Ascending aorta (tissue), 2 donors: ENCODE measurements at regions of chr16 and their contacts with region 1.

Region 1: GRCh38 chr16:77788181-77789084 is at the start of gene VAT1L:
- DNase-seq: peak in 1 of 2 donors; percentile 72
- H3K4me3 ChIP-seq: peak within 1 kb of the TSS; percentile 73 to 80
- H3K27ac ChIP-seq: peak within 1 kb of the TSS; percentile 50 to 60
- H3K4me1 ChIP-seq: peaks cover 0 to 8% of the 10 kb centered on the region in 2 donors
- H3K27me3 ChIP-seq: no peaks in the 10 kb centered on the region
- CTCF ChIP-seq: no peak
- total RNA-seq, gene VAT1L: 12.6 TPM

Region 2: GRCh38 chr16:77675464-77676324 is 112.7 kb before region 1 on chr16:
- intact Hi-C with region 1: loop called (anchors 5 kb)
- DNase-seq: peak in 1 of 2 donors; percentile 88
- H3K4me3 ChIP-seq: no peak overlapping the region
- H3K27ac ChIP-seq: no peak overlapping the region
- H3K4me1 ChIP-seq: no peaks in the 10 kb centered on the region
- H3K27me3 ChIP-seq: no peaks in the 10 kb centered on the region
- CTCF ChIP-seq: peak; percentile 90 to 95 (median 91)

Region 3: GRCh38 chr16:77905459-77905858 is 117.0 kb after region 1 on chr16:
- intact Hi-C with region 1: no loop called
- DNase-seq: no peak
- H3K4me3 ChIP-seq: no peak overlapping the region
- H3K27ac ChIP-seq: no peak overlapping the region
- H3K4me1 ChIP-seq: no peaks in the 10 kb centered on the region
- H3K27me3 ChIP-seq: no peaks in the 10 kb centered on the region
- CTCF ChIP-seq: no peak

Region 4: GRCh38 chr16:77943801-77944200 is 155.4 kb after region 1 on chr16:
- intact Hi-C with region 1: loop called (anchors 5 kb)
- DNase-seq: no peak
- H3K4me3 ChIP-seq: no peak overlapping the region
- H3K27ac ChIP-seq: no peak overlapping the region
- H3K4me1 ChIP-seq: peaks cover 2 to 14% of the 10 kb centered on the region in 2 donors
- H3K27me3 ChIP-seq: no peaks in the 10 kb centered on the region
- CTCF ChIP-seq: no peak

Region 5: GRCh38 chr16:77971306-77972271 is 183.2 kb after region 1 on chr16:
- intact Hi-C with region 1: loop called (anchors 2 kb)
- DNase-seq: peak in 1 of 2 donors; percentile 91
- H3K4me3 ChIP-seq: no peak overlapping the region
- H3K27ac ChIP-seq: peak overlapping the region; percentile 50 to 59
- H3K4me1 ChIP-seq: peaks cover 0 to 5% of the 10 kb centered on the region in 2 donors
- H3K27me3 ChIP-seq: no peaks in the 10 kb centered on the region
- CTCF ChIP-seq: peak; percentile 68 to 89 (median 84)

Region 6: DNA sequence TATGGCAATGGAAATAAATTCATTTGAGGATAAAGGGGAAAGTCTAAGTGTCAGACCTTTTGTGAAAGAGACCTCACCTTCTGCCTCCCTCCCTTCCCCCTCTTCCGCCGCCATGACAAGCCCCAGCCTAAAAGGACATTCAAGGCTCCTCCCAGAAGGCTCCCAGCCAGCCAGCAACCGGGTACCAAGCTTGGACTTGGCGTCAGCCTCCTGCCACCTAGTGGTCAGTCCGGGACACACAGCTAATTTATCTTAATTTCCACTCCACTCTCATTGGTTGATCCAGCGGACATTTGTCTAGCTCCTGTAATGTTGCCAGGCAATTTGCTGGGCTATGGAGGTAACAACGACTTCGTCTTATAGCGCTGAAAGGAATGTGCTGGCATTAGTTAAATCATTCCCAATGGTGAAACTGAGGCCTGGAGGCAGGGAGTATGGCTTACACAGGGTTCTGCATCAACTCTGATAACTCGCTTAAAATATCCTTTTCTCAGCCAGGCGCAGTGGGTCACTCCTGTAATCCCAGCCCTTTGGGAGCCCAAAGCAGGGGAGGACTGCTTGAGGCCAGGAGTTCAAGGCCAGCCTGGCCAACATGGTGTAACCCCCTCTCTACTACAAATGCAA is 214.6 kb after region 1 on chr16:
- intact Hi-C with region 1: loop called (anchors 5 kb)
- DNase-seq: peak; percentile 32 to 94
- H3K4me3 ChIP-seq: no peak overlapping the region
- H3K27ac ChIP-seq: no peak overlapping the region
- H3K4me1 ChIP-seq: no peaks in the 10 kb centered on the region
- H3K27me3 ChIP-seq: no peaks in the 10 kb centered on the region
- CTCF ChIP-seq: peak; percentile 87 to 90 (median 88)

Region 7: DNA sequence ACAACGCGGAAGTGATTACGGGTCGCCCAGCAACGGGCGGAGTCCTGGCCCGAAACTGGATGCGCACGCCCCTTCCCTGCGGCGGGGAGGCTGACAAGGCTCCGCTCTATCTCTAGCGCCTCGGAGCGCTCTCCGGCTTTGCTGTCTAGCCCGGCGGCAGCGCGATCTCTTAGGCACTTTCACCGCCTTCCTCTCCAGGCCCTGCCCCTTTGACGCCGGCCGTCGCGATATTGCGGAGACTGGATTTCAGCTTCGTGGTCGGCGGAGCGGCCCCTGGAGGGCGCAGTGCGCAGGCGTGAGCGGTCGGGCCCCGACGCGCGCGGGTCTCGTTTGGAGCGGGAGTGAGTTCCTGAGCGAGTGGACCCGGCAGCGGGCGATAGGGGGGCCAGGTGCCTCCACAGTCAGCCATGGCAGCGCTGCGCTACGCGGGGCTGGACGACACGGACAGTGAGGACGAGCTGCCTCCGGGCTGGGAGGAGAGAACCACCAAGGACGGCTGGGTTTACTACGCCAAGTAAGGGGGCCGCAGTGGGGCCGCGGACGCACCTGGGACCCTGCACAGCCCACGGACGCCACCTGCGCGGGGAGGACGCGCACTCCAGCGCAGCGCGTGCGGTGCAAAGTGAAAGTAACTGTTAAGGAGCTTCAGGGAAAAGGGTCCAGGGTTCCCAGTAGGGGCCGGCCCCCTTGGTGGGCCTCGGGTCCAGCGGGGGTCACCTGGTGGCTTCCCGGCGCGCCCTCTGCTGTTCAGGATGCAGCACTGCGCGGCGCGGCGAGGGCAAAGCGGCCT is 311.1 kb after region 1 on chr16 and contains the start of gene WWOX:
- intact Hi-C with region 1: loop called (anchors 10 kb)
- DNase-seq: peak; percentile 91 to 99
- H3K4me3 ChIP-seq: peak within 1 kb of the TSS; percentile 67 to 98
- H3K27ac ChIP-seq: peak within 1 kb of the TSS; percentile 88 to 92
- H3K4me1 ChIP-seq: peaks cover 4 to 15% of the 10 kb centered on the region in 2 donors
- H3K27me3 ChIP-seq: no peaks in the 10 kb centered on the region
- CTCF ChIP-seq: peak; percentile 76 to 94 (median 81)
- total RNA-seq, gene WWOX: 106 TPM